Mammary epithelial cell (primary cell): ENCODE measurements at regions of chr12 and their contacts with region 1.

Region 1: GRCh38 chr12:89051065-89051677 is 301.1 kb downstream of the DUSP6 start:
- DNase-seq: peak; percentile 64
- H3K4me3 ChIP-seq: no peak overlapping the region
- H3K27ac ChIP-seq: no peak overlapping the region
- H3K4me1 ChIP-seq: no peaks in the 10 kb centered on the region
- H3K27me3 ChIP-seq: no peaks in the 10 kb centered on the region
- CTCF ChIP-seq: peak; percentile 92 to 96

Region 2: GRCh38 chr12:89162704-89163261 is 111.6 kb after region 1 on chr12:
- CTCF ChIA-PET with region 1: no interaction called
- dilution Hi-C with region 1: no loop called
- in situ Hi-C with region 1: no loop called
- intact Hi-C with region 1: loop called (anchors 1 kb)
- DNase-seq: peak; percentile 100
- H3K4me3 ChIP-seq: no peak overlapping the region
- H3K27ac ChIP-seq: peak overlapping the region; percentile 77
- H3K4me1 ChIP-seq: peaks cover 44% of the 10 kb centered on the region
- H3K27me3 ChIP-seq: no peaks in the 10 kb centered on the region
- CTCF ChIP-seq: no peak

Region 3: DNA sequence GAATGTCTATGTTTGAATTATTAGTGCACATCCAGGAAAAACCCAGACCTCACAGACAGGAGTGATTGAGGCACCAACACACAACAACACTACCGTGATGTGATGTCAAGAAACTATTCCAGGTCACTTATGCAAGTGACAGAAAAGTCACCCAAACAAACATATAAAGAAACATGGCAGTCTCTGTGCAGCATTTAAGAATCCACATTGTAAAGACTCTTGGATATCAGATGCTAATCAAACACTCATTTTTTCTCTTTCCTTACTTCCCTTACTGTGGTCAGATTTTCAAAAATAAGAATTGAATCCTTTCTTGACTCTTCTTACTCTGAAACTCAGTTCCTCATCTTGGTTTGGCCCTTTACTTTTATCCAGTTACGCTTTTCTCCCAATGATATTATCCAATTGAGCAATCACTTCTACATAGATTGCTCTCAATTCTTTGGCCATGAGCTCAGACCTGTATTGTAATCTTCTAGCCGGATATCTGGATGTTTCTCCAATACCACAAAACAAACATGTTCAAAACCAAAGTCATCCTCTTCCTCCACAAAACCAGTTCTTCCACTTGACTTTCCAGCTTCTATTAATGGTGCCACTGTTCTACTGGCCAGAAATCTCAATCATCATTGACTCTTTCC is 185.7 kb after region 1 on chr12:
- CTCF ChIA-PET with region 1: no interaction called
- dilution Hi-C with region 1: no loop called
- in situ Hi-C with region 1: no loop called
- intact Hi-C with region 1: no loop called
- DNase-seq: peak; percentile 96
- H3K4me3 ChIP-seq: no peak overlapping the region
- H3K27ac ChIP-seq: peak overlapping the region; percentile 68
- H3K4me1 ChIP-seq: peaks cover 31% of the 10 kb centered on the region
- H3K27me3 ChIP-seq: no peaks in the 10 kb centered on the region
- CTCF ChIP-seq: no peak

Region 4: DNA sequence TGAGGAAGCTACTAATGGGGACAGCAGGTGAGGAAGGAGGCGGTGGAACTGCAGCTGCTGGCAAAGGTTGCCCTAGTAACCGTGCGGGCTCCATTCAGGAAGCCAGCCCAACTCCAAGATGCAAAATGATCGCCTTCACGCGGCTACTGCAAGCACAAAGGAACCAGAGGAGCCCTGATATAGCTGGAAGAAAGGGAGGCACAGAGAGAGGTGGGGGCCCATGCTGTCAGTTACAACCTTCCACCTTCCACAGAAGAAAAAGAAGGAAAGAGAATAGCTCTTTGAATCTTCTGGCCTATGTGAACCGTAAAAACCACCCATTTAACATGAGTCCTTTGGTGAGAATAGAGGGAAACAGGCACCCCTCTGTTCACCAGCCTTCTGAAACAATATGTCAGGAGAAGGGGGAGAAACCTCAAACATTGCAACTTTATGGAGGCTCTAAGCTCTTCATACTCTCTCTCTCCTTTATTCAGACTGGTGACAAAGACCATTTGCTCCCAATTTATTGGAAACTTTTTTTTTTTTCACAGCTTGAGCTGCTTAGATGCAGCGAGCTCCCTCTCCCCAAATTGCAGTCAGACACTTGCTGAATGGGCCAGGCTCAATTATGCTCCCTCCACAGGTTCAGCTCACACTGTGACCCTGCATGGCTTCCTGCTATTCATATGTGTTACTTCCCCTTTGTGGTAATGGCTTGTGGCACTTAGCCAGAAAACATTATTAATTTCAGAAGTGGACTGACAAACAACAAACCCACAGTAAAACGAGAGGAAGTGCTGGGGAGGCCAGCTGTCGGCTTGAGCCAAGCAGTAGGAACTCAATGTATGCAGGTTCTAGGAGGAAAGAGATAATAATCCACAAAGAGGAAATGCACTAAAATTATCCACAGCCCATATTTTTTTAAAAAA is 294.9 kb after region 1 on chr12:
- CTCF ChIA-PET with region 1: interaction called, 3 read pairs
- dilution Hi-C with region 1: loop called (anchors 5 kb)
- in situ Hi-C with region 1: loop called (anchors 5 to 10 kb)
- intact Hi-C with region 1: loop called (anchors 1 kb)
- DNase-seq: peak; percentile 82
- H3K4me3 ChIP-seq: no peak overlapping the region
- H3K27ac ChIP-seq: peak overlapping the region; percentile 19
- H3K4me1 ChIP-seq: peaks cover 17% of the 10 kb centered on the region
- H3K27me3 ChIP-seq: no peaks in the 10 kb centered on the region
- CTCF ChIP-seq: no peak

Region 5: GRCh38 chr12:89451841-89452251 is 400.7 kb after region 1 on chr12:
- CTCF ChIA-PET with region 1: no interaction called
- dilution Hi-C with region 1: no loop called
- in situ Hi-C with region 1: loop called (anchors 10 kb)
- intact Hi-C with region 1: no loop called
- DNase-seq: peak; percentile 74
- H3K4me3 ChIP-seq: no peak overlapping the region
- H3K27ac ChIP-seq: peak overlapping the region; percentile 85
- H3K4me1 ChIP-seq: peaks cover 30% of the 10 kb centered on the region
- H3K27me3 ChIP-seq: no peaks in the 10 kb centered on the region
- CTCF ChIP-seq: no peak